ENCODE measurements at regions of chr12 and their contacts with region 1.

Region 1: GRCh38 chr12:7645394-7646177 is 20.1 kb downstream of the APOBEC1 start:
- DNase-seq: peak; percentile 69
- H3K4me3 ChIP-seq: peak overlapping the region; percentile 6
- H3K27ac ChIP-seq: peak overlapping the region; percentile 12
- H3K4me1 ChIP-seq: peaks cover 53% of the 10 kb centered on the region
- CTCF ChIP-seq: peak; percentile 97

Region 2: DNA sequence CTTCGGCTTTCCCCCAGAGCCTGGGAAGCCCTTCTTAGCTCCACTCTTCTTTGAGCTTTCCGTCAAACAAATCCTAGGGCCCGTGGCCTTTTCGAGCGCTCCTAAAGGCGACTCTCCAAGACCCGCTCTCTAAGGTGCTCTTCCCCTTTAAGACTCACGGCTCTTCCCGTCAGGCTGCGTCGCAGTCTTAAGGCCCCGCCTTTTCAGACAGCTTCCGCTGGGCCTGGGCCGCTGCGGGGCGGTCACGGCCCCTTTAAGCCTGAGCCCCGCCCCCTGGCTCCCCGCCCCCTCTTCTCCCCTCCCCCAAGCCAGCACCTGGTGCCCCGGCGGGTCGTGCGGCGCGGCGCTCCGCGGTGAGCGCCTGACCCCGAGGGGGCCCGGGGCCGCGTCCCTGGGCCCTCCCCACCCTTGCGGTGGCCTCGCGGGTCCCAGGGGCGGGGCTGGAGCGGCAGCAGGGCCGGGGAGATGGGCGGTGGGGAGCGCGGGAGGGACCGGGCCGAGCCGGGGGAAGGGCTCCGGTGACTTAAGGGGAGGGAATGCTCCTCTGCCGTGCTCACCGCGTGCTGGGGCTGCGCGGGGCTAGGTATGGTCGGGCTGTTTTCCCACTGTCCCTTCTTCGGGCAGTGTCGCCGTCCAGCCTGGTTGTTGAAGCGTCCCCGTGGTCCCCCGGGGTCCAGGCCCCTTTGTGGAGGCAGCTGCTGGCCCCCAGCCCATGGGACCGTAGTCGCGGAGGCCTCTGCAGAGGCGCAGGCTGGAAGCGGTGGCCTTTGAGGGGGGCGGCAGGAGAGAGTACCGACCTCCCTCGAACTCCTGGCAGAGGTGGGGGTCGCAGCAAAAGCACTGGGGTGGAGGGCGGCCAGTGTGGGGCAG is 456.0 kb before region 1 on chr12 and contains the start of gene PEX5:
- CTCF ChIA-PET with region 1: no interaction called
- POLR2A ChIA-PET with region 1: interaction called, 11 read pairs
- intact Hi-C with region 1: loop called (anchors 1 kb)
- DNase-seq: peak; percentile 98
- H3K4me3 ChIP-seq: peak within 1 kb of the TSS; percentile 85
- H3K27ac ChIP-seq: peak within 1 kb of the TSS; percentile 72
- H3K4me1 ChIP-seq: peaks cover 26% of the 10 kb centered on the region
- CTCF ChIP-seq: no peak
- total RNA-seq, gene PEX5: 45.6 and 54.4 TPM in 2 replicates

Region 3: DNA sequence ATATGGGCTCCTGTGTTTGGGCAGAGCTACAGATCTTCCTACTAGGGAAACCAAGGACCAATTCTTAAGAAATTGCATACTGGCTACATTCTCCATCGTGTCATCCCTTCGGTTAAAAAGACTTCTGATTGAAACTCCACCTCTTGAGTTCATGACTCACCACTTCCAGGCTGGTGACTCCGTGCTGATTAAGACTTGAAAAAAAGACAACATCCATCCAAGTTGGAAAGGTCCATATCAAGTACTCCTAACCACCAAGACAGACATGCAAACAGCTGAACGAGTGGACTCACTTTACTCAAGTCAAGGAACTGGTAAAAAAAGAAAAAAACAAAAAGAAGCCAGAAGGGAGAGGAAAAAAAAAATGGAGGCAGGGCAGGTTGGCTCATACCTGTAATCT is 43.3 kb before region 1 on chr12:
- CTCF ChIA-PET with region 1: no interaction called
- POLR2A ChIA-PET with region 1: no interaction called
- intact Hi-C with region 1: no loop called
- DNase-seq: no peak
- H3K4me3 ChIP-seq: no peak overlapping the region
- H3K27ac ChIP-seq: no peak overlapping the region
- H3K4me1 ChIP-seq: no peaks in the 10 kb centered on the region
- CTCF ChIP-seq: no peak

Region 4: DNA sequence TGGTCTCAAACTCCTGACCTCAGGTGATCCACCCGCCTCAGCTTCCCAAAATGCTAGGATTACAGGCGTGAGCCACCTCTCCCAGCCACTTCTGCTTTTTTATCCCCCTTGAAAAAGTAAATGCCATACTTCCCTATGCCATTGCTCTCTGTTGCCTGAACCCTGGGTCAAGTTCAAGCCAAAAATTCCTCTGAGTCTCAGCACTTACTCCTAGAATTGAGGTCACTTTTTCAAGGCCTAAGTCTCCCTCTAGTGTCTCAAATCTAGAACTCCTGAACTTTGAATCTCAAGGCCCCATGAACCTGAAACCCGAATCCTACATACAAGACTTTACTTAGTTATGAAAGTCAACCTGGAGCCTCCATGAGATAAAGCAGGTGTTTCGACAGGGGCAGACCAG is 21.5 kb after region 1 on chr12:
- CTCF ChIA-PET with region 1: no interaction called
- POLR2A ChIA-PET with region 1: interaction called, 5 read pairs
- intact Hi-C with region 1: loop called (anchors 2 kb)
- DNase-seq: peak; percentile 42
- H3K4me3 ChIP-seq: no peak overlapping the region
- H3K27ac ChIP-seq: no peak overlapping the region
- H3K4me1 ChIP-seq: no peaks in the 10 kb centered on the region
- CTCF ChIP-seq: peak; percentile 73

Region 5: GRCh38 chr12:7806863-7807487 is 161.4 kb after region 1 on chr12:
- CTCF ChIA-PET with region 1: interaction called, 3 read pairs
- POLR2A ChIA-PET with region 1: interaction called, 3 read pairs
- intact Hi-C with region 1: loop called (anchors 2 kb)
- DNase-seq: peak; percentile 65
- H3K4me3 ChIP-seq: no peak overlapping the region
- H3K27ac ChIP-seq: no peak overlapping the region
- H3K4me1 ChIP-seq: no peaks in the 10 kb centered on the region
- CTCF ChIP-seq: peak; percentile 100

Region 6: DNA sequence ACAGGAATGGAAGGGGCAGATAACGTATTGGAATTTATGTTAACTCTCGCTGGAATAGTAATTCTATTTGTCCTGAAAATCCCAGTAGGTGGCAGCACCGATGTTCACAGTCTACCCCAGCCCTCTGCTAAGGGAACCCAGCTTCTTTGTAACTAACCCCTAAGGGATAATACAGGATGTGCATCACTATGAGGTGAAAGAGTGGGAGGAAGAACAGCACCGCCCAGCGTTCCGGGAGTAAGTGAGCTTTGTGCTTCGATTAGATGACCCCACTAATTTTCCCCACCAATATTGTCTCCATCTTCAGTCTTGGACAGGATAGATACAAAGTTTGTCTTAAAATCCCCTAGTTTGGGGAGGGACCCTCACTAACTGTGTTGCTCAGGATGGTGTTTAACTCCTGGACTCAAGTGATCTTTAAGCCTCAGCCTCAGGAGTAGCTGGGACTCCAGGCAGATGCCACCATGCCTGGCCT is 287.7 kb after region 1 on chr12:
- CTCF ChIA-PET with region 1: interaction called, 3 read pairs
- POLR2A ChIA-PET with region 1: interaction called, 7 read pairs
- intact Hi-C with region 1: loop called (anchors 5 kb)
- DNase-seq: peak; percentile 92
- H3K4me3 ChIP-seq: peak overlapping the region; percentile 72
- H3K27ac ChIP-seq: peak overlapping the region; percentile 54
- H3K4me1 ChIP-seq: peaks cover 27% of the 10 kb centered on the region
- CTCF ChIP-seq: peak; percentile 93

Region 7: GRCh38 chr12:7995266-7995963 is 349.8 kb after region 1 on chr12:
- CTCF ChIA-PET with region 1: no interaction called
- POLR2A ChIA-PET with region 1: no interaction called
- intact Hi-C with region 1: loop called (anchors 2 kb)
- DNase-seq: peak; percentile 88
- H3K4me3 ChIP-seq: no peak overlapping the region
- H3K27ac ChIP-seq: no peak overlapping the region
- H3K4me1 ChIP-seq: peaks cover 14% of the 10 kb centered on the region
- CTCF ChIP-seq: peak; percentile 93

Region 8: DNA sequence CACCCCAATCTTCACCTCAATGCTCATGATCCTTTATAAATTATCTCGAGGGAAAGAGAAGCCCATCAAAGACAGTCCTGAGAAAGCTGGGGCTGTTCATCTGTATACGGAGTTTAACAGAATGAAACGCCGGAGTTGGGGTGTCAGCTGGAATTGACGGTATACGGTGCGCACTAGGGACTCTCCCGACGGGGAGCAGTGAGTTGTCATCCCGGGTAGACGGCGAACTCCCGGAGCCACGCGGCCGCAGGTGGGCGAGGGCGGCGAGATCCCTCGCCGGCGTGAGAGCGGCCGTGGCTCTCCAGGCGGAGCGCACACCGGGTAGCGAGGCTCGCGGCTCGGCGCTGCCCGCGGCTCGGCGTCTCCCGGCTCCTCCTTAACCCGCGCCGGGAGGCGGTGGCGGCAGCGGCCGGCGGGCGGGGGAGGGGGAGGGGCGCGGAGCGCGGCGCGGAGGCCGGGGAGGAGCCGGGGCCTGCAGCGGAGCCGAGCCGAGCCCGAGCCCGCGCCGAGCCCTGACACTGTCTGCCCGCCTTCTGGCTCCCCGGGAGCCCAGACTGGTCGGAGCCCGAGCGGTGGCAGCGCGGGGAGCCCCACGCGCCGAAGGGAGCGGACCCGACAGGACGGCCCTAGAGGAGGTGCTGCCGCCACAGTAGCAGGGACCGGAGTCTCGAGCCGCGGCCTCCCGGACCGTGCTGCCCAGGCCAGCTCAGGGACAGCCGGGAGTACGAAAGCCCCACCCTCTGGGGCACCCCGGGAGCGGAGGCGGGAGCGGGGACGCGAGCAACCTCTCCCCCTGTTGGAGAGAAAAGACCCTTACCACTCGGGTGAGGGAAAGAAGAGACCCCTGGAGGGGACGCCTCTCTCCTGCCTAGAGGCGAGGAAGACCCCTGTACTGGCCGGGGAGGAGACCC is 386.9 kb after region 1 on chr12 and contains the start of gene FOXJ2:
- CTCF ChIA-PET with region 1: interaction called, 3 read pairs
- POLR2A ChIA-PET with region 1: no interaction called
- intact Hi-C with region 1: loop called (anchors 10 kb)
- DNase-seq: peak; percentile 66
- H3K4me3 ChIP-seq: peak within 1 kb of the TSS; percentile 87
- H3K27ac ChIP-seq: peak within 1 kb of the TSS; percentile 4
- H3K4me1 ChIP-seq: peaks cover 39% of the 10 kb centered on the region
- CTCF ChIP-seq: peak; percentile 34; the same call in 1 of the 2 replicates
- total RNA-seq, gene FOXJ2: 4.1 and 5.7 TPM in 2 replicates